Body of pancreas (tissue), 4 donors: ENCODE measurements at regions of chr10 and their contacts with region 1.

Region 1: DNA sequence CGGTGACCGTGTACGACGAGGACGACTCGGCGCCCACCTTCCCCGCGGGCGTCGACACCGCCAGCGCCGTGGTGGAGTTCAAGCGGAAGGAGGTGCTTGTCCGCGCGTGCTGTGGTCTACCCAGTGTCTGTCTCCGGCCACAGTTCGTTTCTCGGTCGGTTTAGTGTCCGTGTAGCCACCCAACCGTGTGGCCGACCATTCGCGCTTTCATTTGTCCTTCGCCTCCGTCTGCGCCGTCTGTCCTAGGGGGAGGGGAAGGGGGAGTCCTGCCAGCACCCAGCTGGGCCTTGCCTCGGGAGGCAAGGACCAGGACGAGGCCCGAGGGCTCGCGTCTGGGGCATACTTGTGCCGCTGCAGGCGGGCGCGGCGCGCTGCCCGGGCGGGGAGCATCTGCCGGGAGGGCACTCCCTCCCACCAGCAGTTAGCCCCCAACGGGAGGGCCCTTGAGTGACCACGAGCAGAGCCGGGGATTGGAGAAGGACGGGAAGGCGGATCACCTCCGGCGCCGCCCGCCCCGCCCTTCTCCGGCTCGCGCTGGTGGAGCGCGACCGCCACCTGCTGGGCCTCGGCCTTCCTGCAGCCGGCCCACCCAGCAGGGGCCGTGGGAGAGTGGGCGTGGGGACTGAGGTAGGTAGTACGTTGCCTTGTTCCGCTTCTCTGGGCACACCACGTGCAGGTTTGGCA is 28.4 kb downstream of the RET start:
- DNase-seq: peak; percentile 66 to 79 (median 70)
- ATAC-seq: peak; percentile 85
- H3K4me3 ChIP-seq: peak overlapping the region in 1 of 2 donors; percentile 21
- H3K27ac ChIP-seq: no peak overlapping the region
- H3K4me1 ChIP-seq: peaks cover 14% of the 10 kb centered on the region
- H3K27me3 ChIP-seq: no peaks in the 10 kb centered on the region
- CTCF ChIP-seq: peak; percentile 98 to 99 (median 99)
- POLR2A ChIP-seq: no peak

Region 2: GRCh38 chr10:42753126-42753506 is 352.1 kb before region 1 on chr10:
- intact Hi-C with region 1: loop called (anchors 10 kb)
- DNase-seq: peak; percentile 81 to 89 (median 85)
- ATAC-seq: peak; percentile 89
- H3K4me3 ChIP-seq: peak overlapping the region in 1 of 2 donors; percentile 27
- H3K27ac ChIP-seq: peak overlapping the region in 3 of 4 donors; percentile 14 to 42 (median 15)
- H3K4me1 ChIP-seq: peaks cover 34% of the 10 kb centered on the region
- H3K27me3 ChIP-seq: no peaks in the 10 kb centered on the region
- CTCF ChIP-seq: peak; percentile 74 to 93 (median 89)
- POLR2A ChIP-seq: peak in 2 of 3 donors; percentile 44 to 49

Region 3: GRCh38 chr10:42875792-42876460 is 229.3 kb before region 1 on chr10:
- intact Hi-C with region 1: loop called (anchors 5 kb)
- DNase-seq: peak in 1 of 4 donors; percentile 12
- ATAC-seq: no peak
- H3K4me3 ChIP-seq: no peak overlapping the region
- H3K27ac ChIP-seq: no peak overlapping the region
- H3K4me1 ChIP-seq: no peaks in the 10 kb centered on the region
- H3K27me3 ChIP-seq: no peaks in the 10 kb centered on the region
- CTCF ChIP-seq: no peak
- POLR2A ChIP-seq: no peak